Cardiac septum (tissue), 1 donor: ENCODE measurements at regions of chr3 and their contacts with region 1.

Region 1: DNA sequence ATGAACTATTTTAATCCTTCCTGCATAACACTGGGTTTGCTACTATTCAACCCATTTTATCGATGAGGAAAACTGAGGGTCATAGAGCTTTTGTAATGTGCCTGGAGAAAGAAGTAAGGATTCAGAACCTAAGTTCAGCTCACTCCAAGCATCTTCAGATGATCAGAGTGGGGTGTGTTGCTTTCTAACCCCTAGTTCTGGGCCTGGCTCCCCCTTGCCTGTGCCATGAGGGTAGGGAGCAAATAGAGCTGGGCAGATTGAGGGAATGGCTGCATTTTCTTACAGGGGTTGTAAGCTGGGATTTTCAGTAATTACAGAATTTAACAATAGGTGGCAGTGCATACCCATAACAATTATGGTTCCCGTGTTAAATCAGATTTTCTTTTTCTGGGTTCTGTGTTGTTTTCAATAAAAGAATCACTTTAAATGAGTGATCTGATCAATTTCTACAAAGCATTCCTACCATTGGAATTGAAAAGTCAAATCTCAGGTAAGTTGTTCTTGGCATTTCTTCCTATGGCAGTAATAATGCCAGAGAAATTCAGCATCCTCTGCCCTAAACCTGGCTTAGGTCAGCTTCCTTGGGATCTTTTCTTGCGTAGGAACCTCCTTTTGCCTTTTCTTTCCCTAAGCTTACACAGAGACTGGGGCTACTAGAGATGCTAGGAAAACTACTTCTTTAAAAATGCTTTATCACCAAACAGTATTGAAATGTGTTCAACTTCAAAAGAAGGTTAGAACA is 103.8 kb upstream of the IL12A start:
- DNase-seq: no peak

Region 2: GRCh38 chr3:159828542-159828943 is 56.3 kb before region 1 on chr3:
- intact Hi-C with region 1: loop called (anchors 2 kb)
- DNase-seq: no peak

Region 3: DNA sequence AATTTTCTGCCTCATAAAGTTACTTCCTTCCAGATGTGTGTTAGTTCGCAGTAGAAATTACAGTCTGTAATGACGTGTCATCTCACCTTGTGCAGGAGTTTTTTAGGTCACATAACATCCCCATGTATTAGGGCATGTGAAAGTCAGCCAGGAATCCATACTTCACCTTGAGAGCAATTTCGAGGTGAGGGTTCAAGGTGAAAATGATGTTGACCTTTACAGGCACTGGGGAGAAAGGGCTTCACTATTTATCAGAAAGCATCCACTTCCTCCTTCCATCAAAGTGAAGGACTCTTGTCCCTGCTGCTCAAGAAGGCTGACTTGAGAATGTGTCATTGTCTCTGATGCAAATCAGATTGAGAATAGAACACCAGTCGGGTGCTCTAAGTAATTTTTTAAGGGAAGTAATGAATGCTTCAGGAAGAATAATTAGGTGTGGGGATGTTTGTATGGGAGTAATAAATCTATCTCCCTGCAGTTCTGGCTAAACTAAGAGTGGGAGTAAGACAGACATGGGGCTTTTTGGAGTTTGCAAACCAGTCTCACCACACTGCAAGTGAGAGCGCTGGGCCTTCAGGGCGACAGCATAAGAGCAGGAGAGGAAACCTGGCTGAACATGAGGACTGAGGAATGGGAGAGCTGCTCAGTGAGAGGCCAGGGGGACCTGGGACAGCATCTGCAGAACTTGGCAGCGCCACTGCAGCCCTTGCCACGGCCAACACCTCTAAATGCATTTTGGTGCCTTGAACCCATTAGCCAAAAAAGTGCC is 17.9 kb after region 1 on chr3:
- intact Hi-C with region 1: no loop called
- DNase-seq: no peak

Region 4: DNA sequence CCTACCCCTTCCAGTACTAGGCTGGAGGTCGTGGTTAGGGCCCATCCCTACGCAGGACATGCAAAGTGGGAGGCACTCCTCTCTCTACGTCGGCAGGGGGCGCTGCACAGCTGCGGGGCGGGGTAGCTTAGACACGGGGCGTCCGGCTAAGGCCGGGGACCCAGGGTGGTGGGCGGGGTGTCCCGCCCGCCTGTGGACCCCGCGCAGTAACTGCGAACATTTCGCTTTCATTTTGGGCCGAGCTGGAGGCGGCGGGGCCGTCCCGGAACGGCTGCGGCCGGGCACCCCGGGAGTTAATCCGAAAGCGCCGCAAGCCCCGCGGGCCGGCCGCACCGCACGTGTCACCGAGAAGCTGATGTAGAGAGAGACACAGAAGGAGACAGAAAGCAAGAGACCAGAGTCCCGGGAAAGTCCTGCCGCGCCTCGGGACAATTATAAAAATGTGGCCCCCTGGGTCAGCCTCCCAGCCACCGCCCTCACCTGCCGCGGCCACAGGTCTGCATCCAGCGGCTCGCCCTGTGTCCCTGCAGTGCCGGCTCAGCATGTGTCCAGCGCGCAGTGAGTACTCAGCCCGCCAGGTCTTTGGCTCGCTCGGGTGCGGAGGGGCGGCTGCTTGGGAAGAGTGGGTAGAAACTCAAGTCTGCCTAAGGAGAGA is 103.9 kb after region 1 on chr3 and contains the start of gene IL12A:
- intact Hi-C with region 1: loop called (anchors 5 kb)
- DNase-seq: peak; percentile 88
- total RNA-seq, gene IL12A: 0.51 TPM

Region 5: DNA sequence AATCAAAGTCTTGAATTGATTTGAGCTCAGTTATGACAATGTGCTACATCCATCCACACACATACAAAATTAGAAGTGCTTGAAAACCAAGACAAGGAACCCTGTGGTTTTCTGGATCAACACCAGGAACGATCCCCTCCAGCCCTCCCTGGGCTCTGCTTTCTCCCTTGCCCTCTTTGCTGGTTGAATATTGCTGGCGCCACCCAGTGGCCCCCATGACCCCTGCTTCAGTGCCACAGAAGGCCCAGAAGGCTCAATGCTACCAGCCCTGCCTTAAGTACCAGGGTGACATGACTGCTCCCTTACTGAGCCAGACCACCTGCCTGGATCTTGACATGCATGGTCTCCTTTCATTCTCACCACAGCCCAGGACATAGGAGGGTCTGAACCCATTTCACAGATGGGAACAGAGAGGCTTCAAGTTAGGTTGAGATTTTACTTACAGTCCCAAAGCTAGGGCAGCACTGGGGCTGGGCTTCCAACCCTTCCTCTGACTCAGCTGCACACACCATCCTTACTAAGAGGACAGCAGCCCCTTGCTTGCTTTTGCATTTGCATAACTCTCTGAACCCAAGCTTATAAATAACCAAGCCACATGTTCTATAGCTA is 118.8 kb after region 1 on chr3:
- intact Hi-C with region 1: loop called (anchors 2 kb)
- DNase-seq: no peak